B cell (primary cell): ENCODE measurements at regions of chr15 and their contacts with region 1.

Region 1: GRCh38 chr15:30979457-30979856 is 12.0 kb downstream of the MTMR10 start:
- DNase-seq: peak; percentile 41
- ATAC-seq: peak; percentile 67
- H3K4me3 ChIP-seq: peak overlapping the region in 1 of 5 experiments; percentile 43
- H3K4me3 Mint-ChIP-seq: peak overlapping the region; percentile 65
- H3K27ac ChIP-seq: peak overlapping the region; percentile 18 to 58
- H3K27ac Mint-ChIP-seq: peak overlapping the region; percentile 83
- H3K4me1 ChIP-seq: peaks cover 50 to 57% of the 10 kb centered on the region in 2 donors
- H3K4me1 Mint-ChIP-seq: peaks cover 75% of the 10 kb centered on the region
- H3K27me3 ChIP-seq: no peaks in the 10 kb centered on the region
- H3K27me3 Mint-ChIP-seq: no peaks in the 10 kb centered on the region
- CTCF ChIP-seq: no peak

Region 2: DNA sequence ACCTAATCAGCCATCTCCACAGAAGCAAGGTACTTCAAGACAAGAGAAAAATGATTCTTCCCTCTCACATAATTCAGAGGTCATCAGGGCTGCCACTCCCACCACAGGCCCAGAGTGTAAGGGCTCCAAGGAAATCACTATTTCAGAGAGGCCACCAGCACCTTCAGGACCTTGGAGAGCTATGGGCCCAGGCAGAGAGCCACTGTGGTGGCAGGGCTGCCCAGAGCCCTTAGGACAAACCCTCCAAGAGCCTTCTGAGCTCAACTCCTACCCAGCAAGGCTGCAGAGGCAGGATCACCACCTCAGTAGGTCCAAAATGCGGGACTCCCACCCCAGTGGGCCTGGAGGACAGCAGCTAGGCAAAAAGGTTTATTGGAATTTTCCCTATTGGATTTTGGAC is 93.6 kb before region 1 on chr15:
- CTCF ChIA-PET with region 1: no interaction called
- POLR2A ChIA-PET with region 1: no interaction called
- intact Hi-C with region 1: no loop called
- DNase-seq: no peak
- ATAC-seq: no peak
- H3K4me3 ChIP-seq: no peak overlapping the region
- H3K4me3 Mint-ChIP-seq: no peak overlapping the region
- H3K27ac ChIP-seq: no peak overlapping the region
- H3K27ac Mint-ChIP-seq: no peak overlapping the region
- H3K4me1 ChIP-seq: no peaks in the 10 kb centered on the region
- H3K4me1 Mint-ChIP-seq: no peaks in the 10 kb centered on the region
- H3K27me3 ChIP-seq: no peaks in the 10 kb centered on the region
- H3K27me3 Mint-ChIP-seq: peaks cover 3% of the 10 kb centered on the region
- CTCF ChIP-seq: no peak

Region 3: DNA sequence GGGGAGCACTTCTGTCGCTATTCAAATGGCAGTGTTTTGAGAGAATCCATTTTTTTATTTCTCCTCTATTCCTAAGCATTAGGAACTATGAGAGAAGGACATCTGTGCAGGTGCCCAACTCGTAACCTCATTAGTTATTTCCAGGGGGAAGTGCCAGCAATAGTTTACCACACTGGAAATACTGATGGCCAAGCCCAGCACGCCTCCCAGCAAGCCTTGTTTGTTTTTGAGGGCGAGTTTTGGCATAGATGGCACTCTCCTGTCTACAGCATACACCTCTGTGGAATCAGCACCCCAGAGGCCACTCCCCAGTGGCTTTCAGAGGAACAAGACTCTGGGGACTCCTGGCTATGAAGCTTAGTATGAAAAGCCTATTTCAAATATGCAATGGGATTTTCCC is 39.1 kb before region 1 on chr15:
- CTCF ChIA-PET with region 1: no interaction called
- POLR2A ChIA-PET with region 1: no interaction called
- intact Hi-C with region 1: no loop called
- DNase-seq: no peak
- ATAC-seq: no peak
- H3K4me3 ChIP-seq: no peak overlapping the region
- H3K4me3 Mint-ChIP-seq: no peak overlapping the region
- H3K27ac ChIP-seq: no peak overlapping the region
- H3K27ac Mint-ChIP-seq: peak overlapping the region; percentile 3
- H3K4me1 ChIP-seq: no peaks in the 10 kb centered on the region
- H3K4me1 Mint-ChIP-seq: no peaks in the 10 kb centered on the region
- H3K27me3 ChIP-seq: no peaks in the 10 kb centered on the region
- H3K27me3 Mint-ChIP-seq: no peaks in the 10 kb centered on the region
- CTCF ChIP-seq: no peak

Region 4: DNA sequence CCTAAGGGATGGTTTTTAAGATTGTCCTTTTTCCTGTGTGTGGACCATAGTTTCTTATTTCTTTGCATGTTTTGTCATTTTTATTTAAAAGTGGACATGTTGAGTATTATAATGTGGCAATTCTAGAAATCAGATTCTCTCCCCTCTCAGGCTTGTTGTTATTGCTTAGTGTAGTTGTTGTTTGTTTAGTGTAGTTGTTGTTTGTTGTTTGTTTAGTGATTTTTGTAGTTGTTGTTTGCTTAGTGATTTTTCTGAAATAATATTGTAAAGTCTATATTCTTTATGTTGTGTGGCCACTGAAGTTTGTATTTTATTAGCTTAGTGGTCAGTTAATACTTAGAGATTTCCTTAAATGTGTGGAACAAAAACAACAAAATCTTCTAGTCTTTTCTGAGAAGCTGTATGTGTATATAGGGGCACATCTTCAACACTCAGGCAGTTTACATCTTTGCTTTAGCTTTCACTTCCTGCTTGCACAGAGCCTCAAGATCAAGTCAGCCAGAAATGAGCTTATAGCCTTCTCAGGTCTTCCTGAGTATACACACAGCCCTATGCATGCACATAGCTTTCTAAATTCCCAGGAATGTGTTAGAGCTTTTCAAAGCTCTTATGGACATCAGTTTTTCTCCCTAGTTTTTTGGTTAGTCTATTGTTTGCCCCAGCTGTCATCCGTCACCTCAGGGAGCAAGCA is 34.2 kb after region 1 on chr15:
- CTCF ChIA-PET with region 1: interaction called, 3 read pairs
- POLR2A ChIA-PET with region 1: no interaction called
- intact Hi-C with region 1: loop called (anchors 5 kb)
- DNase-seq: peak; percentile 65
- ATAC-seq: peak; percentile 95
- H3K4me3 ChIP-seq: peak overlapping the region in 1 of 5 experiments; percentile 23
- H3K4me3 Mint-ChIP-seq: peak overlapping the region; percentile 70
- H3K27ac ChIP-seq: peak overlapping the region; percentile 68 to 73
- H3K27ac Mint-ChIP-seq: peak overlapping the region; percentile 96
- H3K4me1 ChIP-seq: peaks cover 30 to 40% of the 10 kb centered on the region in 2 donors
- H3K4me1 Mint-ChIP-seq: peaks cover 43% of the 10 kb centered on the region
- H3K27me3 ChIP-seq: no peaks in the 10 kb centered on the region
- H3K27me3 Mint-ChIP-seq: no peaks in the 10 kb centered on the region
- CTCF ChIP-seq: no peak